Right lobe of liver (tissue), 6 donors: ENCODE measurements at regions of chr15 and their contacts with region 1.

Region 1: DNA sequence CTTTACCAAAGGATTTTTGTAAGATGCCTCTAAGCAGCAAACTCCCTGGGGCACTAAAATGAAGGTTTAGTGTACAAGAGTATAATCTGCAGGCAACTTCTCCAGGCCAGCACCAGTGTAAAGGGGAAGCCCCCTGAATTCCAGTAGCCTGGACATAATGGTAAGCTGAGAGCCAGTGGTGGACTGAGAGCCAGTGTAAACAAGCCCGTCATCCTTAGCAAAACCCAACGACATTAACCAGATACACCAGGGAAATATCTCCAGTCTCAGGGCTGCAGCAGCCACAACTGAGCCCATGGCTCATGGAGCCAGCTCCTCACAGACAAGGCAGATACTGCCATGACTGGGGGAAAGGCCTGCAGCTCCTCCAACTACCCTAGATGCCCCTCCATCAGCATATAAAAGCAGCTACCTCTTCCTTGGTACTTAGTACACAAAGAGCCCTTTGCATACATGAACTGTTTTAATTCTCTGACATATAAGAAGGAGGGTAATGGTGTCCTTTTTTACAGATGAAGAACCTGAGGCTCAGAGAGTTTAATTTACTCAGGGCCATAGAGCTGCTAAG is 21.7 kb downstream of the PARP16 start:
- DNase-seq: no peak
- ATAC-seq: peak in 2 of 4 donors; percentile 22 to 33
- H3K4me3 ChIP-seq: no peak overlapping the region
- H3K27ac ChIP-seq: no peak overlapping the region
- H3K4me1 ChIP-seq: no peaks in the 10 kb centered on the region
- H3K27me3 ChIP-seq: no peaks in the 10 kb centered on the region
- CTCF ChIP-seq: no peak
- POLR2A ChIP-seq: no peak

Region 2: GRCh38 chr15:65209701-65210618 is 55.0 kb before region 1 on chr15:
- intact Hi-C with region 1: loop called in 1 of 2 experiments (anchors 10 kb)
- DNase-seq: no peak
- ATAC-seq: peak in 2 of 4 donors; percentile 6 to 15
- H3K4me3 ChIP-seq: no peak overlapping the region
- H3K27ac ChIP-seq: no peak overlapping the region
- H3K4me1 ChIP-seq: no peaks in the 10 kb centered on the region
- H3K27me3 ChIP-seq: no peaks in the 10 kb centered on the region
- CTCF ChIP-seq: no peak
- POLR2A ChIP-seq: no peak

Region 3: DNA sequence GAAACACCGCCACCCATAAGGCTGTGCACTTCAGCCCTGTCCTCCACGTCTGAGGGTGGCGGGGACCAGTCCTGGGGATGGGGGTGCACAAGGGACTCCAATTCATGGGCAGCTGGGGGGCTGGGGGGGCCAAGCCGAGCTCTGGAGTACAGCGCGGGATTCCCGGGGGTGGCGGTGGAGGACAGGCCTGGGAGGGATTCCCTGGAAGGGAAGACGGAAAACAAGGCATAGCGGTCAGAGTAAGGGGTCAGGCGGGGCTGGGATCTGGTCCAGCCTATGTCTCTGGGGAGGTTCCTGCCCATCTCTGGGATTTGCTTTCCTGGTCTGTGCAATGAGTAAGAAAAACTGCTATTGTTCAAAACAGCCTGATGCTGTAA is 120.9 kb after region 1 on chr15:
- intact Hi-C with region 1: no loop called
- DNase-seq: no peak
- ATAC-seq: peak in 3 of 4 donors; percentile 3 to 21 (median 5)
- H3K4me3 ChIP-seq: no peak overlapping the region
- H3K27ac ChIP-seq: no peak overlapping the region
- H3K4me1 ChIP-seq: peaks cover 0 to 2% (median 0%) of the 10 kb centered on the region in 4 donors
- H3K27me3 ChIP-seq: no peaks in the 10 kb centered on the region
- CTCF ChIP-seq: no peak
- POLR2A ChIP-seq: no peak